ENCODE measurements at regions of chr10 and their contacts with region 1.

Region 1: GRCh38 chr10:58755677-58756076 is 243.0 kb downstream of the BICC1 start:
- DNase-seq: peak in 1 of 2 donors; percentile 66
- H3K4me3 ChIP-seq: peak overlapping the region; percentile 8 to 58 (median 43)
- H3K27ac ChIP-seq: peak overlapping the region; percentile 77 to 87
- H3K4me1 ChIP-seq: no peaks in the 10 kb centered on the region
- H3K27me3 ChIP-seq: no peaks in the 10 kb centered on the region
- CTCF ChIP-seq: no peak
- POLR2A ChIP-seq: no peak

Region 2: DNA sequence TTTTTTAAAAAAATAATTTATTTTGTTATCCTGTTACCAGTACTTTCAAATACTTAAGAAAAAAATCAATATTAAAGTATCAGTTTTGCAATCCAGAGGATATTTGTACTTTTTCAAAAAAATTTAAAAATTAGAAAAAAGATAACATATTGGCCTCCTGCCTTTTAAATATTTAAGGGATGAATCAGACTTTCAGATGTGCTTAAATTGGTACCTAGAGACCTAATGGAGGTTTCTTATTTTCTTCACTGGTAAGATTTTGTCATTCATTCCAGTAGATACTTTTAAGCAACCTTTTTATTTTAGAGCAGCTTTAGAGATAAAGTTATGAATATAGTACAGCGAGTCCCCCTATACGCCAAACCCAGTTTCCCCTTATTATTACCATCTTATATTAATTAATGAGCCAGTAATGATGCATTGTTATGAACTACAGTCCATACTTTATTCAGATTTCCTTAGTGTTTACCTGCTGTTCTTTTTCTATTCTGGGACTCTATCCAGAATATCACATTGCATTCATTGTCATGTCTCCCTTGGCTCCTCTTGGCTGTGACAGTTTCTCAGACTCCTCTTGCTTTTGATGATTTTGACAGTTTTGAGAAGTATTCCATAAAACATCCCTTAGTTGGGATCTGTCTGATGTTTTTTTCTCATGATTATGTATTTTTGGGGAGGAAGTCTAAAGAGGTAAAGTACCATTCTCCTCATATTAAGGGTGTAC is 208.8 kb before region 1 on chr10:
- intact Hi-C with region 1: no loop called
- DNase-seq: no peak
- H3K4me3 ChIP-seq: no peak overlapping the region
- H3K27ac ChIP-seq: no peak overlapping the region
- H3K4me1 ChIP-seq: no peaks in the 10 kb centered on the region
- H3K27me3 ChIP-seq: no peaks in the 10 kb centered on the region
- CTCF ChIP-seq: no peak
- POLR2A ChIP-seq: no peak

Region 3: DNA sequence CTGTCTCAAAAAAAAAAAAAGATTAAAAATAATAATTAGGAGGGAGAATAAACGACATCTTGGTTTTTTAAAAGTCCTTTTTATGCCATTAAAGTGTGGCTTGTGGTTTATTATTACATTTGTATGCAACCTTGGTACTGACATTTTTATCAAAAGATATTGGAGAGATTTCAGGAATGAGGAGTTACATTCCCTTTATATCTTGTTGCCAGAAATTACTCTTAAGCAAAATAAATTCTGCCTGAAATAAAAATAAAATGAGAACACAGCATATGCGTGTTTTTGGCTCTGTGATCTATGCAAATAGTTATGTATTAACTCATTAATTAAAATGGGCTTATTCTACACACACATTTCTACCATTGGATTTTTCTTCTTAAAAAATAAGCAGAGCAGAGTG is 40.6 kb before region 1 on chr10:
- intact Hi-C with region 1: loop called (anchors 2 kb)
- DNase-seq: no peak
- H3K4me3 ChIP-seq: no peak overlapping the region
- H3K27ac ChIP-seq: no peak overlapping the region
- H3K4me1 ChIP-seq: no peaks in the 10 kb centered on the region
- H3K27me3 ChIP-seq: no peaks in the 10 kb centered on the region
- CTCF ChIP-seq: no peak
- POLR2A ChIP-seq: no peak

Region 4: DNA sequence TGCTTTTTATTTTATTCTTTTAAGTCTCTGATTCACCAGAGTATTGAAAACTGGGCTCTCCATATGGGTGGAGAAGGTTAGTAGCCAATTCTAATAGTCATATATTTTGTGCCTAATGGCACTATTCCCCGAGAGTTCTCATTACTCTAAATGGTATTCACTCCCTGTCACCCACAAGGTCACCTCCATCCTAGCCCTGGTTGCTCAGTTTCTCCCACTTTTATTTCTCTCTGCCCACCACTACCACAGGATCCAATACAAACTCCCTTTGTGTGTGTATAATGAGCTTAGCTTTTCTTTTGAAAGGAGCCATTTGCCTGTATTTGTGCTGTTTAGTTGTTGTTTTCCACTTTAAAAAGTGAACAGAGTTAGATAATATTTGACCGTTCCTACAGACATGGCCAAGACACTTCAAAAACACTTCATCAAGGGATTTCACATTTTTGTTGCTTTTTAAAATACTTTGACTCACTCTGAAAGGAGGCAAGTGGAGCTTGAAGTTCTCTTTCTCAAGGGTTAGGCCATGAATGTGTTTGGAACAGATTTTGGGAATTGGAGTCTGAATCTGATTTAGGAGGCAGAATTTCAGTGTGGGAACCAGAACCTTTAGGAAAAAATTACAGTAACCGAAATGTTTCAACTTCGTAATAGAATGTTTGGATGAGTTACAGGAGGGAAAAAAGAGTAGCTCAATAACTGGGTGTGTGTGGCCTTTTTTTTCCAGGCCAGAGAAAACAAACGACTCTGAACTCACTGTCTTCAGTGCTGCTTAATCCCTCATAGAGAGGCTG is 78.3 kb after region 1 on chr10:
- intact Hi-C with region 1: no loop called
- DNase-seq: no peak
- H3K4me3 ChIP-seq: no peak overlapping the region
- H3K27ac ChIP-seq: peak overlapping the region; percentile 4 to 13
- H3K4me1 ChIP-seq: no peaks in the 10 kb centered on the region
- H3K27me3 ChIP-seq: no peaks in the 10 kb centered on the region
- CTCF ChIP-seq: no peak
- POLR2A ChIP-seq: no peak

Region 5: GRCh38 chr10:58909881-58910280 is 154.2 kb after region 1 on chr10:
- intact Hi-C with region 1: no loop called
- DNase-seq: no peak
- H3K4me3 ChIP-seq: no peak overlapping the region
- H3K27ac ChIP-seq: no peak overlapping the region
- H3K4me1 ChIP-seq: no peaks in the 10 kb centered on the region
- H3K27me3 ChIP-seq: no peaks in the 10 kb centered on the region
- CTCF ChIP-seq: no peak
- POLR2A ChIP-seq: no peak

Measured in breast epithelium (tissue), 4 donors.